ENCODE measurements at regions of chr2 and their contacts with region 1.

Region 1: DNA sequence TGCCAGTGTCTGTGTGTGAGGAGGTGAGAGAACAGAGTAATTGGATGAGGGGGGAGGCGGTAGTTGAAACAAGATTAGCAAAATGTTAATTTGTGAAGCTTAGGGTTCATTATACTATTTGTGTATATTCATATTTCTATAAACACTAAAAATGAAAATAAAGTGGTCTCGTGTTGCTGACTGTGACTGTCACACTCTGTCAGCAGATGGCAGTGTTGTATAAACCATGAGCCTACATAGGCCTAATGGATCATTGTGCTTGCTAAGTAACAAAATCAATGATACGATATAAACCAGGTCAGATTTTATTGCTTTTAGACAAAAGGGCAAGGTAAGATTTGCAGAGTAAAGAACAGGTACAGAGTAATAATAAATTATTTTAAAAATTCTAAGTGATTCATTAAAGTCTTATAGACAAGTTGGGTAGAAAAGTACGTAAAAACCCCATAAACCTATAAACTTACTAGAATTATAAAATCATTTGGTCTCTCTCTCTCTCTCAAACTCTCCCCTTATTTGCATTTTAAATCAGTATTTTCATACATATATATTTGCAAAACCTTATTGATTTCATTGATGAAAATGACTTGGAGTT is 182.7 kb downstream of the RPIA start:
- DNase-seq: peak; percentile 74 to 85 (median 80)
- H3K4me3 ChIP-seq: no peak overlapping the region
- H3K27ac ChIP-seq: no peak overlapping the region
- H3K4me1 ChIP-seq: peaks cover 4 to 25% (median 10%) of the 10 kb centered on the region in 4 experiments
- H3K27me3 ChIP-seq: no peaks in the 10 kb centered on the region

Region 2: DNA sequence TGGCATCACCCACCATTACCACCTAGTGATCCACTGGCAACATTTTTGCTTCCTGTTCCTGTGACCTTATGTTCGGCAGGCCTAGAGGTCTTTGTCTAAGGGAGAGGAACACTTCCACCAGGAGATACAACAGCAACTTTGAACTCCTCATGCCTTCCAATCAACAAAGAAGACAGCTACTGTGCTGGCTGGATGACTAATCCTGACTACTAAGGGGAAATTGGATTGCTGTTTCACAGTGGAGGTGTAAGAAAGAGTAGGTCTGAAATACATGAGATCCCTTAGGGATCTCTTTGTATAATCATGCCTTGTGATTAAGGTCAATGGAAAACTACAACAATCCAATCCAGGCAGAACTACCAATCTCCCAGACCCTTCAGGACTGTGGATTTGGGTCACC is 292.1 kb before region 1 on chr2:
- CTCF ChIA-PET with region 1: no interaction called
- POLR2A ChIA-PET with region 1: no interaction called
- DNase-seq: no peak
- H3K4me3 ChIP-seq: no peak overlapping the region
- H3K27ac ChIP-seq: no peak overlapping the region
- H3K4me1 ChIP-seq: no peaks in the 10 kb centered on the region
- H3K27me3 ChIP-seq: no peaks in the 10 kb centered on the region

Region 3: DNA sequence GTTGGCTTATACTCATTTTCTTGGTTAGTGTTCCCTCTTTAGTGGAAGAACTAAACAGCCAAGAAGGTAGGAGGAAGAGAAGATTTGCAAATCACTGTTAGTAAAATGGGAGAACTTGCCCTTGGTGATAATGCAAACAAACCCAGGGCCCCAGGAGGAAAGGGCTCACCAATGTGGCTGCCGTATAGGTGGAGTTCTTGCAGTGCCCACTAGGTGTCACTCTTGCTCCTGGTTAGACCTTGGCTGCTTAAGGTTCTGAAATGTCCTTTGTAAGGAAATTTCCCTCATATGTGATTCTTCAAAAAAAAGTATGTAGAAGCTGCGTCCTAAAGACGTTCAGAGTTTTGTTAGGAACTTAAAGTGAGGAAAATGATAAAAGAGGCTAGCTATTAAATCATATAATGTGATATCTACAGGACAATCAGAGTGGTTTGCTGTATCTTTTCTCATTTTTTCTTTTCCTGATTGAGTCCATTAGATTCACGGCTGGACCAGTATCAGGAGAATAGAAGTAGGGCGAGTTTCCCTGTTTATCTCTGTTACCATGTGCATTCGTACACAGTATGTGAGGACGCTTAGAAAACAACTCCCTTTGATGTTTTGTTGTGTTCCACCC is 134.1 kb before region 1 on chr2:
- CTCF ChIA-PET with region 1: interaction called, 13 read pairs
- POLR2A ChIA-PET with region 1: no interaction called
- DNase-seq: peak; percentile 71 to 87 (median 80)
- H3K4me3 ChIP-seq: no peak overlapping the region
- H3K27ac ChIP-seq: no peak overlapping the region
- H3K4me1 ChIP-seq: peaks cover 6 to 32% (median 18%) of the 10 kb centered on the region in 4 experiments
- H3K27me3 ChIP-seq: no peaks in the 10 kb centered on the region

Region 4: DNA sequence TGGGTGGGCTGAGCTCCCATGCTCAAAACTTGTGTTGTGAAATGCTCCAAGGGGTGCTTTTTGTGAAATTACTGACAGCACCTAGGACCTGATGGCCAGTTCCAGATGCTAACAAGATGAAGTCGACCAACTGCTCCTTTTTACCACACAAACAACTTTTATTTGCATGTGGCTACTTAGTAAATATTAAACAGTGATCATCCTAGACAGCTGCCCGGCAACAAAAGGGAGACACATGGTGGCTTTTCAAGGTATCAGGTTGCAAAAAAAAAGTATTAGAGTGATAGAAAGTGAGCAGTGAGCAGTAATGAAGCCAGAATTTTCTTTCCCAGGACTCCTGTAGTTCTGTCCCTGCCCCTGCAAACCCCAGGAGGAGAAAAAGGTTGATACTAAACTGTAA is 64.1 kb before region 1 on chr2:
- CTCF ChIA-PET with region 1: no interaction called
- POLR2A ChIA-PET with region 1: no interaction called
- DNase-seq: no peak
- H3K4me3 ChIP-seq: no peak overlapping the region
- H3K27ac ChIP-seq: no peak overlapping the region
- H3K4me1 ChIP-seq: no peaks in the 10 kb centered on the region
- H3K27me3 ChIP-seq: no peaks in the 10 kb centered on the region

Region 5: DNA sequence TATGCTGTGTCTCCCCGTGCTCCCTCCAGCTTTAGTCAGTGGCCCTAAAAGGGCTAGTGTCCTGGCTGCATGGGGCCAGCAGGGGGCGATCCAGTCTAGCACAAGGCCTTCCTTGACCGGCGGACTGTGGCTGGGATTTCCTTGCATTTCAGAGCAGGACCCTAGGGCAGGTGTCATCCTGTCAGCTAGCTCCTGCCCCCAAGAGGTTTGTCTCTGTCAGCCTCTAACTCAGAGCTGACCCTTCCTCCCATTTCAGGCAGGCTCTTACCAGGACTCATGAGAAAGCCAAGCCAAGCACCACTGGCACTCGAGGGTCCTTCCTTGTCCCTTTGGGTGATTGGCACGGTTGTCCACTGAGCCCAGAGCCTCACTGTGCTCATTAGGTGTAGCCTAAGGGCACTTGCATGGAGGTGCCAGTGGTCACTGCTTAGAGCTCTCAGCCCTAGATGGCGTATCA is 42.3 kb before region 1 on chr2:
- CTCF ChIA-PET with region 1: interaction called, 71 read pairs
- POLR2A ChIA-PET with region 1: no interaction called
- DNase-seq: peak; percentile 28 to 64 (median 51)
- H3K4me3 ChIP-seq: no peak overlapping the region
- H3K27ac ChIP-seq: no peak overlapping the region
- H3K4me1 ChIP-seq: peaks cover 0 to 9% (median 7%) of the 10 kb centered on the region in 4 experiments
- H3K27me3 ChIP-seq: no peaks in the 10 kb centered on the region

Region 6: GRCh38 chr2:88857951-88858411 is 16.2 kb before region 1 on chr2:
- CTCF ChIA-PET with region 1: interaction called, 12 read pairs
- POLR2A ChIA-PET with region 1: no interaction called
- DNase-seq: peak; percentile 44 to 90 (median 89)
- H3K4me3 ChIP-seq: no peak overlapping the region
- H3K27ac ChIP-seq: peak overlapping the region in 1 of 2 experiments; percentile 65
- H3K4me1 ChIP-seq: peaks cover 2 to 27% (median 14%) of the 10 kb centered on the region in 4 experiments
- H3K27me3 ChIP-seq: no peaks in the 10 kb centered on the region

Region 7: DNA sequence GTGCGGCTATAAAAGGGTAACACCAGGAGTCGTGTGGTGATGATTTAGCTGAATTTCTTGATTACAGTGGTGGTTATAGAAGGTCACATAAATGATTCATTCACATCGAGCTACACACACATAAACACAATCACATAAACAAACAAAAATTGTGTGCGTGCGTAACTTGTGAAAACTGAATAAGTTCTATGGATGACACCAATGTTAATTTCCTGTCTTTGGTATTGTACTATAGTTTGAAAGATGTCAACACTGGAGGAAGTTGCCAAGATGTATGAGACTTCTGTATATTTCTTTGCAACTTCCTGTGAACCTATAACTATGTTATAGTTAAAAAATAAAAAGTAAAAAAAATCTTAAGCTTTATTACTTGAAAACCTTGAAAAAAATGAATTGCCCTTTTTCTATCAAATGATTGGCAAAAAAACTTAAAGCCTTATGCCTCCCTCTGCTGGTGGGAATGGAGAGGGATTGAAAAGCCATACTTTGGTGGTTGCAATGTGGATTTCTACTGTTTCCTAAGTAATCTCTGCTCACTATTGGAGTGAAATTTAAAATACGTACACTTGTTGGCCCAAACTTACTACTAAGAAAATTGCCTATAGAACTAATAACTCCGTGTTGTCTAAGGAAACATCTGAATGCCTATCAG is 45.1 kb after region 1 on chr2:
- CTCF ChIA-PET with region 1: interaction called, 19 read pairs
- POLR2A ChIA-PET with region 1: no interaction called
- DNase-seq: peak; percentile 48 to 73 (median 71)
- H3K4me3 ChIP-seq: no peak overlapping the region
- H3K27ac ChIP-seq: no peak overlapping the region
- H3K4me1 ChIP-seq: no peaks in the 10 kb centered on the region
- H3K27me3 ChIP-seq: no peaks in the 10 kb centered on the region

Measured in common myeloid progenitor, CD34-positive (primary cell).